Activated naive CD4-positive, alpha-beta T cell treated with anti-CD3 and anti-CD28 coated beads for 36 hours (primary cell): ENCODE measurements at regions of chrX and their contacts with region 1.

Region 1: GRCh38 chrX:74291964-74292807 is 11.8 kb upstream of the ZCCHC13 start:
- DNase-seq: peak; percentile 85
- H3K4me3 Mint-ChIP-seq: peak overlapping the region; percentile 94
- H3K27ac Mint-ChIP-seq: peak overlapping the region; percentile 98
- H3K4me1 Mint-ChIP-seq: peaks cover 18% of the 10 kb centered on the region
- H3K27me3 Mint-ChIP-seq: no peaks in the 10 kb centered on the region

Region 2: GRCh38 chrX:72620550-72621145 is 1671.5 kb before region 1 on chrX:
- CTCF ChIA-PET with region 1: no interaction called
- intact Hi-C with region 1: loop called (anchors 5 kb)
- DNase-seq: peak; percentile 64
- H3K4me3 Mint-ChIP-seq: no peak overlapping the region
- H3K27ac Mint-ChIP-seq: peak overlapping the region; percentile 90
- H3K4me1 Mint-ChIP-seq: peaks cover 21% of the 10 kb centered on the region
- H3K27me3 Mint-ChIP-seq: peaks cover 12% of the 10 kb centered on the region

Region 3: GRCh38 chrX:73562984-73563737 is 729.0 kb before region 1 on chrX and contains the start of gene CHIC1:
- CTCF ChIA-PET with region 1: no interaction called
- intact Hi-C with region 1: loop called (anchors 2 kb)
- DNase-seq: peak; percentile 75
- H3K4me3 Mint-ChIP-seq: peak within 1 kb of the TSS; percentile 100
- H3K27ac Mint-ChIP-seq: peak within 1 kb of the TSS; percentile 93
- H3K4me1 Mint-ChIP-seq: peaks cover 13% of the 10 kb centered on the region
- H3K27me3 Mint-ChIP-seq: no peaks in the 10 kb centered on the region
- total RNA-seq, gene CHIC1: 3.5 to 4.5 TPM

Region 4: DNA sequence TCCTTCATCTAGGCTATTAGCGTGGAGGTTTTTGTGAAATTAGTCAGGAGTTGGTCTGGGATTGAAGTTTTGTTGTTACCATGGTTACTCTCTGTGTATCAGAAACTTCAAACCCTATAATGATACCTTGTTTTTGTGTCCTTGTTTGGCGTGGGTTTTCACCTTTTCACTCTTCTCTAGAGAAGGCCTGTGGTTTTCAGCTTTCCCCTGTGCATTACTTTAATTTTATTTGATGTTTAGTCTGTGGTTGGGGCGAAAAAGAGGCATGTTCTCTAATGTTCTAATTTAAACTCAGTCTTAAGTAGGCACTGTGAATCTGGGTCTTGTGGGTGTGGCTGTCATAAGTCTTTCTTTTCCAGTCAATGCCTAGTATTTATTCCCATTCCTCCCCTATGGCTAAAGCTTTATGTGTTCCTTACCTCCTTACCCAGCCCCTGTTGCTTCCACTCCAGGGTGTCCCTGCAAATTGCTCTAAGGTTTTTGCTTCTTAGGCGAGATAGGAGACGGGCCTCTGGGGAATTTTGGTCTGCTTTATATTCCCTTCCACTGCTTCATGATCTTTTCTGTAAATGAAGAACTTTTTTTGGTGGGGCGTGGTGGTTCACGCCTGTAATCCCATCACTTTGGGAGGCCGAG is 314.5 kb before region 1 on chrX:
- CTCF ChIA-PET with region 1: interaction called, 3 read pairs
- intact Hi-C with region 1: loop called (anchors 10 kb)
- DNase-seq: peak; percentile 16
- H3K4me3 Mint-ChIP-seq: no peak overlapping the region
- H3K27ac Mint-ChIP-seq: peak overlapping the region; percentile 36
- H3K4me1 Mint-ChIP-seq: peaks cover 30% of the 10 kb centered on the region
- H3K27me3 Mint-ChIP-seq: no peaks in the 10 kb centered on the region

Region 5: GRCh38 chrX:74343343-74344279 is 51.4 kb after region 1 on chrX:
- CTCF ChIA-PET with region 1: no interaction called
- intact Hi-C with region 1: loop called (anchors 2 kb)
- DNase-seq: peak; percentile 53
- H3K4me3 Mint-ChIP-seq: no peak overlapping the region
- H3K27ac Mint-ChIP-seq: no peak overlapping the region
- H3K4me1 Mint-ChIP-seq: peaks cover 4% of the 10 kb centered on the region
- H3K27me3 Mint-ChIP-seq: no peaks in the 10 kb centered on the region

Region 6: GRCh38 chrX:74614093-74614909 is 322.1 kb after region 1 on chrX and contains the start of gene RLIM:
- CTCF ChIA-PET with region 1: no interaction called
- intact Hi-C with region 1: loop called (anchors 1 kb)
- DNase-seq: peak; percentile 94
- H3K4me3 Mint-ChIP-seq: peak within 1 kb of the TSS; percentile 98
- H3K27ac Mint-ChIP-seq: peak within 1 kb of the TSS; percentile 100
- H3K4me1 Mint-ChIP-seq: peaks cover 19% of the 10 kb centered on the region
- H3K27me3 Mint-ChIP-seq: no peaks in the 10 kb centered on the region
- total RNA-seq, gene RLIM: 41.8 to 43.5 TPM

Region 7: DNA sequence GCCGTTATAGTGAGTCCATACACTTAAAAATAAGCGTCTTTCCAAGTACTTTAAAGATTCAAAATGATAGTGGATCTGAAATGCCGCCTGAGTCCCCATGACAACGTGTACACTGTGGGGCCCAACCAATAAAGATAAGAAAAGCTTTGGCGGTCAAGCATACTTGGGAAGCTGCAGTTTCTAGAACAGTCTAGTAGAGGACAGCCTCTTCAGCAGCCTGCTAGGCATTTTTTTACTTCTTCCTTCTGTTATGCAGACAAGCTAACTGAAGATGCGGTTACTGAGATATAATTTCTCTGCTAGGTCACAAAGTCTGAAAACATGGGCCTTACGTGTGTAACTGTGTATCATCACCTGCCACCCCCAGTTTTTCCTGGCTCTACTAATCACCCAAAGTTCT is 981.3 kb after region 1 on chrX:
- CTCF ChIA-PET with region 1: no interaction called
- intact Hi-C with region 1: loop called (anchors 2 kb)
- DNase-seq: peak; percentile 26
- H3K4me3 Mint-ChIP-seq: peak overlapping the region; percentile 85
- H3K27ac Mint-ChIP-seq: peak overlapping the region; percentile 91
- H3K4me1 Mint-ChIP-seq: peaks cover 43% of the 10 kb centered on the region
- H3K27me3 Mint-ChIP-seq: no peaks in the 10 kb centered on the region